Left lung (tissue), 14 donors: ENCODE measurements at regions of chr11 and their contacts with region 1.

Region 1: GRCh38 chr11:95835768-95836488 is 45.6 kb downstream of the CEP57 start:
- DNase-seq: peak in 3 of 4 donors; percentile 53 to 83 (median 53)
- ATAC-seq: peak; percentile 96
- H3K4me3 ChIP-seq: no peak overlapping the region
- H3K27ac ChIP-seq: no peak overlapping the region
- H3K4me1 ChIP-seq: no peaks in the 10 kb centered on the region
- H3K27me3 ChIP-seq: no peaks in the 10 kb centered on the region
- CTCF ChIP-seq: peak; percentile 79 to 89

Region 2: GRCh38 chr11:96389720-96390487 is 554.0 kb after region 1 on chr11 and contains the starts of genes CCDC82 and JRKL:
- intact Hi-C with region 1: loop called in 1 of 2 experiments (anchors 10 kb)
- DNase-seq: peak; percentile 93 to 99 (median 98)
- ATAC-seq: peak; percentile 100
- H3K4me3 ChIP-seq: peak within 1 kb of the TSS; percentile 68 to 75
- H3K27ac ChIP-seq: peak within 1 kb of the TSS; percentile 89 to 94
- H3K4me1 ChIP-seq: peaks cover 0 to 35% of the 10 kb centered on the region in 2 donors
- H3K27me3 ChIP-seq: no peaks in the 10 kb centered on the region
- CTCF ChIP-seq: no peak
- polyA plus RNA-seq, gene CCDC82: 53.4 to 64.5 (median 62.3) TPM
- polyA plus RNA-seq, gene JRKL: 24.0 to 29.2 (median 27.6) TPM